Calu3 (cell line): ENCODE measurements at regions of chr6 and their contacts with region 1.

Region 1: DNA sequence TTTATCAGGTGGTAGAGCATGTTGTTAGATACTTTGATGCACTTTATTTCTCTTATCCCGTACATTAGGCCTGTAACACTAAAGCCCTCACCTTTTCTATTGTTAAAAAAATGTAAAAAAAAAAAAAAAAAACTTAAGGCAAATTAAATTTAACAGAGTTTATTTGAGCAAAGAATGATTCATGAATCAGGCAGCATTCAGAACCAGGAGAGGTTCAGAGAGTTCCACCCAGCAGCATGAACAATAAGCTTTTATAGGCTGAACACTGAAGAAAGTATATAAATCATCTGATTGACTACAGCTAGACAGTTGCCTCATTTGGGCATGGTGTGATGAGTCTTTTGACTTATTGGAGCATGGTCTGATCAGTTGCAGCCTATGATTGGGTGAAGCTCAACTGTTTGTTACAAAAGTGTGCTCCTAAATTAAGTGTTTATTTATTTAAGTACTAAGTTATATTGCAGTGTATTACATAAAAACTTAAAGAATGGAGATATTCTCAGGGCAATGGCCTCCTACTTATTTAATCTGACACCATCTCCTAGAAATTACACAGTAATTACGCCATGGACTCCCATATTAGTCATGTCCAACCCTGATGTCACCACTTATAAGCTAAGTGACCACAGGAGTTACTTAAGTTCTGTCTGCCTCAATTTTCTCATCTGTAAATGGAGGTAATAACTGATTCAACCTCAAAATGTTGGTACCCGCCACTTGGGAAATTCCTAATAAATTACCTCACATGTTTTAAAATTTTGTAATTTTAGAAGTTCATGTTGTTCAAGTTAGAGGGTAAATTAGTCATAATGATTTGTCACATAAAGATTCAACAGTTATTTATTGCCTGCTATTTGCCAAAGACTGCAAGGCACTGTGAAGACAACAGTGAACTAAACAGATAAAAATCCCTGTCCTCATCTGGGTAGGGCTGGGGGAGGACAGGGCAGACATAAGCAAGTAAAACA is 15.1 kb upstream of the ROS1 start:
- DNase-seq: no peak
- H3K4me3 Mint-ChIP-seq: no peak overlapping the region
- H3K27ac Mint-ChIP-seq: peak overlapping the region; percentile 91
- H3K4me1 Mint-ChIP-seq: peaks cover 19% of the 10 kb centered on the region
- H3K27me3 Mint-ChIP-seq: no peaks in the 10 kb centered on the region
- CTCF ChIP-seq: no peak

Region 2: DNA sequence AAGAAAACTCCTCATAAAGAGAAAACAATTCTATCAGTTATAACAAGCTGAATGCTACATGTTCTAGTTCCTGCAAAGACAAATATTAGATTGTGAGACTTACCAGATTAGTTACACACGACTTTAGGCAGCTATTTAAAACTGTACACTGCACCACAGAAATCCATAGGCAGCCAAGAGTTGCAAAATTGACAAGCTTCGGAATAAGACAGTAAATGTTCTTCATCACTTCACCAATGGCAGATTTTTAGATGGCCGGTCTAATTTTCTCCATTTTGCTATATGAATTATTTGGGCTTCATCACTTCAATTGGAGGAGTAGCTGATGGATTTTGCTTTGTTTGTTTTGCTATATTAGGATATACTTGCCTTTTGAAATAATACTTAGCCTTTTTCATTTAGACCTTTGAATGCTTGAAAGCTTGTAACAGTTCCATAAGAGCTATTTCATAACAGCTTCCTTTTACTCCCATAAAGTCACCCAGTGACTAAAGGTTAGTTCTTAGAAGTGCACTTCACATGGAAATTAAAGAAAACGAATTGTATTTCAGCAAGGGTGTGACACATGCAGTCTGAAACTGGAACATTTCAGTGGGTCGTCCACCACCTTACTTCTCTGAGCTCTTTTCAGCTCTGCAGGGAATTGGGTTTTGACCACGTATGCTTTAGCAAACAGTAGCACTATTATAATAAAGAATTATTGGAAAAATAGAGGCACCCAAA is 15.2 kb before region 1 on chr6 and contains the start of gene ROS1:
- CTCF ChIA-PET with region 1: interaction called, 12 read pairs
- intact Hi-C with region 1: no loop called
- DNase-seq: peak; percentile 26
- H3K4me3 Mint-ChIP-seq: peak within 1 kb of the TSS; percentile 59
- H3K27ac Mint-ChIP-seq: peak within 1 kb of the TSS; percentile 87
- H3K4me1 Mint-ChIP-seq: peaks cover 56% of the 10 kb centered on the region
- H3K27me3 Mint-ChIP-seq: no peaks in the 10 kb centered on the region
- CTCF ChIP-seq: no peak
- total RNA-seq, gene ROS1: 5.1 and 8.1 TPM in 2 replicates